ENCODE measurements at regions of chr3 and their contacts with region 1.

Region 1: GRCh38 chr3:184371570-184372018 is 6.4 kb downstream of the THPO start:
- DNase-seq: peak; percentile 76

Region 2: GRCh38 chr3:184469423-184469822 is 97.8 kb after region 1 on chr3:
- CTCF ChIA-PET with region 1: interaction called, 20 read pairs
- POLR2A ChIA-PET with region 1: no interaction called
- DNase-seq: peak; percentile 53

Region 3: DNA sequence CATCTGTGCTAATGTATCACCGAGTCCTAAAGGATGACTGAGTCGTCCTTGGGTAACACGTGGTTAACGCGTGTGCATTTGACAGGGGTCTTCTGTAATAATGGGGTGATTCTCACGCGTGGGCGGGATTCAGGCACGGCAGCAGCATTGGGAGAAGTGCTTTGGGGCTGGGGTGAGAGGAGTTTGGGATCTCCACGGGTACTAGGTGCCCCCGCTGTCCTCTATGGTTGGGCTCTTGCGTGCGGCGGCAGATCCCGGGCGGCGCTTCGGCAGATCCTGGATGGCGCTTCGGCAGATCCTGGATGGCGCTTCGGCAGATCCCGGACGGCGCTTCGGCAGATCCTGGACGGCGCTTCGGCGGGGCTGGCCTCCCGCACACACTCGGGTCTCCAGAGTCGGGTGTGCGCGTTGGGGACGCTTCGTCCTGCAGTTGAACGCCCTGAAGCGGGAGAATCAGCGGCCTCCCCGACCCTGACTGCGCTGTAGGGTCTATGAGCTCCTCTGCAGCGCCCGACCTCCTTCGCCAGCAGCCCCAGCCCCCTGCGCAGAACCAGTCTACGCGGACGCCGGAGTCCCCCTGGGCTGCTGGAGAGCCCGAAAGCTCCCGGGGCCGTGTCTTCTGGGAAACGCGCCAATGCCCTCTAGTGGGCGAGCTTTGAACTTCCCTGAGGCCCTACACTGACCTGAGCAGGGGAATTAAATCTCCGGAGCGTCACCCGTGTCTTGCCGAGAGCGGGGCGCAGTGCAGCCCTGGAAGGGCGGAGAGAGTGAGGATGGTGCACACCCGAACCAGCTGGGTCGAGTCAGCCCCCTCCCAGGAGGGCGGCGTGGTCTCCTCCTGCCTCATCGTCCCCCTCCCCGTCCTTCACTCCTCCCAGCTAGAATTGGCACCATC is 141.9 kb after region 1 on chr3:
- CTCF ChIA-PET with region 1: interaction called, 19 read pairs
- POLR2A ChIA-PET with region 1: no interaction called
- DNase-seq: peak; percentile 84

Measured in HEK293T (cell line).